Endothelial cell of umbilical vein (primary cell): ENCODE measurements at regions of chr13 and their contacts with region 1.

Region 1: GRCh38 chr13:30132623-30133553 is 174.5 kb downstream of the KATNAL1 start:
- DNase-seq: peak; percentile 89
- H3K4me3 ChIP-seq: no peak overlapping the region
- H3K27ac ChIP-seq: no peak overlapping the region
- H3K4me1 ChIP-seq: peaks cover 4% of the 10 kb centered on the region
- H3K27me3 ChIP-seq: no peaks in the 10 kb centered on the region
- CTCF ChIP-seq: peak; percentile 79 to 92
- POLR2A ChIP-seq: no peak

Region 2: GRCh38 chr13:29532116-29532515 is 600.8 kb before region 1 on chr13:
- CTCF ChIA-PET with region 1: no interaction called
- POLR2A ChIA-PET with region 1: no interaction called
- dilution Hi-C with region 1: no loop called
- intact Hi-C with region 1: no loop called
- DNase-seq: no peak
- H3K4me3 ChIP-seq: no peak overlapping the region
- H3K27ac ChIP-seq: no peak overlapping the region
- H3K4me1 ChIP-seq: peaks cover 5% of the 10 kb centered on the region
- H3K27me3 ChIP-seq: no peaks in the 10 kb centered on the region
- CTCF ChIP-seq: no peak
- POLR2A ChIP-seq: no peak

Region 3: DNA sequence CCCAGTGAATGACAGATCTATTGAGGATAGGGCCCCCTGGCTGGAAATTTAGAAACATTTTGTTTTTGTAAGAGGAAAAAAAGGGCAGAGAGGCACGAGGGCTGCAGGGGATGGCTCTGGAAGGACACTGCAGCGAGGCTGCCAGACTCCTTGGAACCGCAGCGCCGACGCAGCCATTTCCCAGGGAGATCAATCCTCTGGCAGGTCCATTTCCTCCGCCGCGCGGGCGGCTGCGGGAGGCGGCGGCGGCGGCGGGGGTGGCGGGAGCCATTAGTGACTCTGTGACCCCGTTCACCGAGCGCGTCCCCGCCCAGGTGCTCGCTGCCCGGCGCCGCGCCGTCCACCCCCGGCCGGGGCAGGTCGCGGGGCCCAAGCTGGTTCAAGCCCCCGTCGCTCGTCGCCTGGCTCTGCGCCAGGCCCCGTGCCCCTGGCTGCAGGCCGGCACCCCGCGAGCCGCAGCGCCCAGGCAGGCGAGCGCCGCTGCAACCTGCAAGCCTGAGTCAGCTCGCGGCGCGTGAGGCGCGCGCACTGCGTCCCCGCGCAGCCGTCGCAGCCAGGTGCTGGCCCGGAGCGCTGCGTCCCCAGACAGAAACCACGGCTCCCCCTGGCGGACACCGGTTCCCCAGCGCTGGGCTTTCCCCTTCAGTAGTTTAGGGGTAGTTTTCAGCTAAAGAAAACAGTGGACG is 18.2 kb before region 1 on chr13:
- CTCF ChIA-PET with region 1: interaction called, 76 read pairs
- POLR2A ChIA-PET with region 1: no interaction called
- dilution Hi-C with region 1: no loop called
- intact Hi-C with region 1: no loop called
- DNase-seq: peak; percentile 80
- H3K4me3 ChIP-seq: peak overlapping the region; percentile 5 to 45 (median 40)
- H3K27ac ChIP-seq: no peak overlapping the region
- H3K4me1 ChIP-seq: peaks cover 3% of the 10 kb centered on the region
- H3K27me3 ChIP-seq: peaks cover 38 to 47% of the 10 kb centered on the region in 2 experiments
- CTCF ChIP-seq: peak; percentile 94 to 95
- POLR2A ChIP-seq: no peak

Region 4: GRCh38 chr13:30306762-30307193 is 173.9 kb after region 1 on chr13:
- CTCF ChIA-PET with region 1: interaction called, 18 read pairs
- POLR2A ChIA-PET with region 1: no interaction called
- dilution Hi-C with region 1: no loop called
- intact Hi-C with region 1: loop called (anchors 10 kb)
- DNase-seq: peak; percentile 90
- H3K4me3 ChIP-seq: peak overlapping the region; percentile 36 to 88 (median 77)
- H3K27ac ChIP-seq: peak overlapping the region; percentile 86
- H3K4me1 ChIP-seq: peaks cover 24% of the 10 kb centered on the region
- H3K27me3 ChIP-seq: no peaks in the 10 kb centered on the region
- CTCF ChIP-seq: no peak
- POLR2A ChIP-seq: peak; percentile 50

Region 5: GRCh38 chr13:30395192-30396084 is 262.6 kb after region 1 on chr13:
- CTCF ChIA-PET with region 1: interaction called, 10 read pairs
- POLR2A ChIA-PET with region 1: no interaction called
- dilution Hi-C with region 1: no loop called
- intact Hi-C with region 1: no loop called
- DNase-seq: peak; percentile 89
- H3K4me3 ChIP-seq: peak overlapping the region; percentile 39 to 96 (median 95)
- H3K27ac ChIP-seq: peak overlapping the region; percentile 66
- H3K4me1 ChIP-seq: peaks cover 14% of the 10 kb centered on the region
- H3K27me3 ChIP-seq: peaks cover 4 to 7% of the 10 kb centered on the region in 2 experiments
- CTCF ChIP-seq: no peak
- POLR2A ChIP-seq: peak; percentile 89

Region 6: GRCh38 chr13:30437177-30437576 is 304.3 kb after region 1 on chr13:
- CTCF ChIA-PET with region 1: no interaction called
- POLR2A ChIA-PET with region 1: no interaction called
- dilution Hi-C with region 1: no loop called
- intact Hi-C with region 1: no loop called
- DNase-seq: no peak
- H3K4me3 ChIP-seq: no peak overlapping the region
- H3K27ac ChIP-seq: no peak overlapping the region
- H3K4me1 ChIP-seq: no peaks in the 10 kb centered on the region
- H3K27me3 ChIP-seq: peaks cover 5 to 6% of the 10 kb centered on the region in 2 experiments
- CTCF ChIP-seq: no peak
- POLR2A ChIP-seq: no peak

Region 7: GRCh38 chr13:30551189-30551588 is 418.3 kb after region 1 on chr13:
- CTCF ChIA-PET with region 1: interaction called, 8 read pairs
- POLR2A ChIA-PET with region 1: no interaction called
- dilution Hi-C with region 1: no loop called
- intact Hi-C with region 1: loop called (anchors 1 kb)
- DNase-seq: peak; percentile 26
- H3K4me3 ChIP-seq: no peak overlapping the region
- H3K27ac ChIP-seq: no peak overlapping the region
- H3K4me1 ChIP-seq: no peaks in the 10 kb centered on the region
- H3K27me3 ChIP-seq: no peaks in the 10 kb centered on the region
- CTCF ChIP-seq: peak in 1 of 2 donors; percentile 8
- POLR2A ChIP-seq: no peak

Region 8: DNA sequence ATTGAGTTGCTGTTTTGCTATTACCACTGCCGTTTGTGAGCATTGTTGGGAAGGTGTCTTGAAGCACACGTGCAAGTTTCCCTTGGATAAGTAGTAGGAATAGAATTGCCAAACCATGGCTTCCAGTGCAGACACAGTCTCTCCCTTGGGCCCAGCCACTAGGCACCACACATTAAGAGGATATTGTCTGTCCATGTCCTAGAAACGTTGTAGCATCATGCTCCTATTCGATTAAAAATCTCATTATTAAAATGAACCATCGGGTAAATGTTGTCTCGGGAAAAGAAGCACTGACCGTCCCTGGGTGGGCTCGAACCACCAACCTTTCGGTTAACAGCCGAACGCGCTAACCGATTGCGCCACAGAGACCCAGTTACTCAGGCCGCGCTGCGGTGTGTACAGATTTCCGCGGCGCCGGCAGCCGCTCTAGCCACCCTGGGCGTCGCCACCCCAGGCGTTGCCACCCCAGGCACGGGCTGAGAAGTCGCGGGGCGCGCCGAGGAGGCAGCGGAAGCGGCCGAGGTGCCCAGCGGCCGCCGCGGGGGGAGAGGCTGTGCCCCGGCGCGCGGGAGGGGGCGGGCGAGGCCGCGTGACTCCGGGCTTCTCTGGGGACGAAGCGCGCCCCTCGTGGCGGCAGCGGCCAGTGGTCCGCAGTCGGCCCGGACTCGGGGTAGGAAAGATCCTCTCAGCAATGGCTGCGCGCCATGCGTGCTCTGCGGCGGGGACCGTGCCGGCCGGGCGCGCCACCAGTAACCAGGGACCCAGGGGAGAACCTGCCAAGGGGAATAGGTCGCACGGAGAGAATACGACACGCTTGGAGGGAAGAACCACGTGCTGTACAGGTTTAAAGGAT is 541.0 kb after region 1 on chr13:
- CTCF ChIA-PET with region 1: interaction called, 3 read pairs
- POLR2A ChIA-PET with region 1: no interaction called
- dilution Hi-C with region 1: no loop called
- intact Hi-C with region 1: loop called (anchors 1 kb)
- DNase-seq: peak; percentile 88
- H3K4me3 ChIP-seq: peak overlapping the region; percentile 39 to 48 (median 43)
- H3K27ac ChIP-seq: peak overlapping the region; percentile 66
- H3K4me1 ChIP-seq: peaks cover 8% of the 10 kb centered on the region
- H3K27me3 ChIP-seq: no peaks in the 10 kb centered on the region
- CTCF ChIP-seq: peak; percentile 82 to 83
- POLR2A ChIP-seq: no peak